GM10248 (cell line): ENCODE measurements at regions of chr3 and their contacts with region 1.

Region 1: DNA sequence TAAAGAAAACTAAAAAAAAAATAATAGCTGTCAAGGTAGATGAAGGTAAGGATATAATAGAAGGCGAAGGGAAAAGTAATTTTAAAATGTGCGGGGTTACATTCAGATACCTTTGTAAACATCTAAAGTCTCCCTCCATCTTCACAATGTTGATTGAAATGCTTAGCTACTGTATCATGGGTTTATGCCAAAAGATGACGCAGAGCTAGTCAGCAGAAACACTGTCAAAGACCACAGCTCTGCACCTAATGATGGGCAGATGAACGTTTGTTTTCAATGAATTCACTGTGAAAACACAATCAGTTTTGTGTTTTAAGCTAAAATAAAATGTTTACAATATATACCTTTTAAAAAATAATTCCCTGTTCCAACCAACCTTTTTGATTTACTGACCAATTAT is 61.2 kb downstream of the RFTN1 start:
- DNase-seq: no peak
- CTCF ChIP-seq: no peak

Region 2: DNA sequence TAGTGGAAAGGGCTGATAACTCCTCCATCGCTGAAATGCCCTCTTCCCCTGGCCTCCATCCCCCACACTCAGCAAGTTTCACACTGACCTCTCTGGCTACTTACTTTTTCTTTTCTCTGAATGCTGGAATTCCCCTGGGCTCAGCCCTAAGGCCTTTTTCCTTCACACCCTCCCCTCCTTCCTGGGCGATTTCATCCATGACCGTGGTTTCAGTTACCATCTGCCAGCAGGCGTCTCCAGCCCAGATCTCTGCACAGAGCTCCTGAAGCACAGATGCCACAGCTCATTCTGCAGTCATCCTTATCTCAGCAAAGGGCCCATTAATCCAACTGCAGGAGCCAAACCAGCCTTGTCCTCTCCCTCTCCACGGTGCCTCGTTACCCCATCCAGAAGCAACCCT is 52.8 kb before region 1 on chr3:
- CTCF ChIA-PET with region 1: no interaction called
- POLR2A ChIA-PET with region 1: no interaction called
- DNase-seq: no peak
- CTCF ChIP-seq: peak; percentile 16

Region 3: GRCh38 chr3:16467393-16467792 is 15.1 kb after region 1 on chr3:
- CTCF ChIA-PET with region 1: interaction called, 33 read pairs
- POLR2A ChIA-PET with region 1: no interaction called
- DNase-seq: peak; percentile 67
- CTCF ChIP-seq: no peak

Region 4: GRCh38 chr3:16589867-16590624 is 137.8 kb after region 1 on chr3:
- CTCF ChIA-PET with region 1: no interaction called
- POLR2A ChIA-PET with region 1: no interaction called
- DNase-seq: peak; percentile 41
- CTCF ChIP-seq: no peak

Region 5: GRCh38 chr3:16723978-16724377 is 271.7 kb after region 1 on chr3:
- CTCF ChIA-PET with region 1: no interaction called
- POLR2A ChIA-PET with region 1: no interaction called
- DNase-seq: no peak
- CTCF ChIP-seq: no peak